Activated naive CD4-positive, alpha-beta T cell treated with anti-CD3 and anti-CD28 coated beads, Interleukin-2, amount 10 ng/mL, durations not matched to agents 7 days and 5 days (primary cell): ENCODE measurements at regions of chr1 and their contacts with region 1.

Region 1: GRCh38 chr1:115138968-115139367 is 49.7 kb upstream of the TSPAN2 start:
- DNase-seq: peak; percentile 73
- H3K4me3 Mint-ChIP-seq: peak overlapping the region; percentile 20
- H3K27ac Mint-ChIP-seq: no peak overlapping the region
- H3K4me1 Mint-ChIP-seq: peaks cover 3% of the 10 kb centered on the region
- H3K27me3 Mint-ChIP-seq: peaks cover 24% of the 10 kb centered on the region

Region 2: DNA sequence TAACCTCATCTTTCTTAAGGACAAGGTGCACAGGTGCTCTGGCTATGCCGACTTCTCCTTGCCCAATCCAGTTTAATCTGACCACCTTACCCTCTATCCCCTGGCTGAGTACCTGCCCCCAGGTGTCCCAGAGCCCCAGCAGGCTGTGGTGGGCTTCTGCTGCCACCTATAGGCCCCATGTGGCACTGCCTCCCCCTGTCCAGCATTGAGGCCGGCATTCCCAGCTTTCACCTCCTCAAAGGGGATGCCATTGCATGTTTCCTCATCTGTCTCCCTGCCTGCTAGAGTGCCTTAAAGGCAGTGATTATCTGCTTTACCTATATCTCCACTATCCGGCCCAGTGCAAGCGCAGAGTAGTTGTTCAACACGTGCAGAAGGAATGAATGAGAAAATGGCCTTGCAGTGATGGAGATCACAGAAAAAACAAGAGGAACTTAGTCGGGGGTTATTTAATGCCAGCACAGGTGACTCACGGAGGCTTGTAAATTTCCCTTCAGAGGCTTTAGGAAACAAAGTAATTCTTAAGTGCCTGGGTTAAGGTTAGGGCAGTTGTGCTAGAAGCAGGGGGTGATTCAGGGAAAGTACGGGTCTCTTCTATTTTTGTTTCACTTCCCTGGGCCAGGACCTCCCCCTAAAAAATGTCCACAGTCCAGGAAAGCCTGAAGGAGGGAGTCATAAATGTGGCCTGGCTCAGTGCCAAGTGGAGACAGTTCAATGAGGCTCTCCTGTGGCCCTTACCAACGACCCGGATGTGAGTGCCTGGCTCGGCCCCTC is 330.9 kb after region 1 on chr1:
- CTCF ChIA-PET with region 1: interaction called, 21 read pairs
- DNase-seq: peak; percentile 33
- H3K4me3 Mint-ChIP-seq: no peak overlapping the region
- H3K27ac Mint-ChIP-seq: no peak overlapping the region
- H3K4me1 Mint-ChIP-seq: no peaks in the 10 kb centered on the region
- H3K27me3 Mint-ChIP-seq: no peaks in the 10 kb centered on the region

Region 3: GRCh38 chr1:115595279-115596079 is 456.5 kb after region 1 on chr1:
- CTCF ChIA-PET with region 1: interaction called, 96 read pairs
- DNase-seq: peak; percentile 76
- H3K4me3 Mint-ChIP-seq: no peak overlapping the region
- H3K27ac Mint-ChIP-seq: no peak overlapping the region
- H3K4me1 Mint-ChIP-seq: no peaks in the 10 kb centered on the region
- H3K27me3 Mint-ChIP-seq: peaks cover 4% of the 10 kb centered on the region